Activated CD4-positive, alpha-beta T cell treated with anti-CD3 and anti-CD28 coated beads for 36 hours (primary cell): ENCODE measurements at regions of chr7 and their contacts with region 1.

Region 1: DNA sequence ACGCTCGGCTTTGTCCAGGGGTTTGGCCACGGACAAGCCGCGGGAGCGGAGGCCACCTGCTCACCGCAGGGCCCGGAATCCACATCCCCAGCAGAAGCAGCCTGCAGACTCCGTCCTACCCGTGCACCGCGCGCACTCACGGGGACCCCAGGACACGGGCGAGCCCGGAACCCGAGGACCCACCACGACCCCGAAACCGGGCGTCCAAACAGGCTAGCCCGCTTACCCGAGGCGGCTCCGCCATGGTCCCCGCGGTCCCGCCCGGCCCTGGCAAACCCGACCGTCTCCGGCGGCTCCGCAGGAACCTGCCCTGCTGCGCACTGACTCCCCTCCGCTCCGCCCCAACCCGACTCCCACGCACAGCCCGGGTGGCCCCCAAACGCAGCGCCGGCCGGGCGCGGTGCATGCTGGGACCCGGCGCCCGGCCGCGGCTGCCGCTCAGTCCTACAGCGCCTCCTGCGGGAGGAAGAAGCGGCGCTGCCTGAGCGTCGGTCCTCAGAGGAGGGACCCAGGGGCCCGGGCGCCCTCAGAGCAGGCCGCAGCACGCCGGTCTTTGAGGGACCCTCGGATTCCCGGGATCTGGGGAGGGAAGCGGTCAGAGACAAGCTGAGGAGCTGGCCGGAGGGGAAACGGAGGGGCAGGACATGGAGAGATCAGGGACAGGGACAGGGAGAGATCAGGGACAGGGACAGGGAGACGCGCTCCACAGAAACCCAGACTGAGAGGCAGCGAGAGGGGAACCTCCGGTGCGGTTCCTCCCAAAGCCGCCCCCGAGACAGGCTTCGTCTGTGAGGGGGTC is at the start of gene ZNF786:
- DNase-seq: peak; percentile 97
- ATAC-seq: peak; percentile 87
- H3K4me3 Mint-ChIP-seq: peak within 1 kb of the TSS; percentile 89
- H3K27ac Mint-ChIP-seq: peak within 1 kb of the TSS; percentile 100
- H3K4me1 Mint-ChIP-seq: peaks cover 19% of the 10 kb centered on the region
- H3K27me3 Mint-ChIP-seq: no peaks in the 10 kb centered on the region
- total RNA-seq, gene ZNF786: 4.4 to 4.8 TPM

Region 2: GRCh38 chr7:148987010-148987750 is 103.4 kb before region 1 on chr7:
- CTCF ChIA-PET with region 1: no interaction called
- POLR2A ChIA-PET with region 1: no interaction called
- intact Hi-C with region 1: loop called (anchors 1 to 5 kb)
- DNase-seq: peak; percentile 88
- ATAC-seq: peak; percentile 84
- H3K4me3 Mint-ChIP-seq: peak overlapping the region; percentile 90
- H3K27ac Mint-ChIP-seq: peak overlapping the region; percentile 97
- H3K4me1 Mint-ChIP-seq: peaks cover 40% of the 10 kb centered on the region
- H3K27me3 Mint-ChIP-seq: peaks cover 2% of the 10 kb centered on the region

Region 3: DNA sequence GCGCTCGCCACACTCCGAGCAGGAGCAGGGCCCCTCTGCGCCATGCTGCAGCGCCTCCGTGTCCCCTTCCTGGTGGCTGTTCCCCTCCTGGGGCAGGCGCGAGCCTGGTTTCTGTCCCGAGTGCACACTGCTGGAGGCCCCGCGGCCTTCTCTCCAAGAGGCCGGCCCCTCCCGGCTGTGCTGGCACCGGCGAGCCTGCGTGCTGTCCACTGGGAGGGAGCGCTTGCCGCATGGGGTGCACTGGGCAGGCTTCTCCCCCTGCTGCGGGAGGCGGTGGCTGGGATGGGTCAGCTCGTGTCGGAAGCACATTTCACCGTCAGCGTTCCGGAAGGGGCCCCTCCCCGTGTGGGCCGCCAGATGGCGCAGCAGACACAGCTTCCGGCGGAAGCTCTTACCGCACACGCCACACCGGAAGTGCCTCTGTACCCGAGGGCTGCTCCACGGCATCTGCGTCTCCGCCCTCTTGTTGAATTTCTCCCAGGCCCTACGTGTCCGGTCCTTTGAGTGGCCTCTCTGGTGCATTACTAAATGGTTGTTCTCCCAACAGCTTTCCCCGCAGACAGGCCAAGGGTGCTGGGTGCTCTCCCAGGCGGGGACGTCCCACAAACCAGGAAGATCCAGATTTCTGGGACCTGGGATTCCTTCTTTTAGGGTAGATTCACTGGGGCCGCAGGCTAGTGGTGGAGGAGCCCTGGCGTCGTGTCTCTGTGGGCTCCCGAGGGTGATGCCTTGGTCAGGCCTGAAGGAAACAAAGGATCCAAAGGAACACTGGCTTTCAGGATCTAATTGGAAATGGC is 18.8 kb before region 1 on chr7:
- CTCF ChIA-PET with region 1: interaction called, 3 read pairs
- POLR2A ChIA-PET with region 1: no interaction called
- intact Hi-C with region 1: loop called in 1 of 2 experiments (anchors 1 kb)
- DNase-seq: peak; percentile 70
- ATAC-seq: peak; percentile 84
- H3K4me3 Mint-ChIP-seq: peak overlapping the region; percentile 46
- H3K27ac Mint-ChIP-seq: peak overlapping the region; percentile 63
- H3K4me1 Mint-ChIP-seq: peaks cover 9% of the 10 kb centered on the region
- H3K27me3 Mint-ChIP-seq: no peaks in the 10 kb centered on the region

Region 4: GRCh38 chr7:149147072-149147751 is 56.6 kb after region 1 on chr7 and contains the start of gene ZNF398:
- CTCF ChIA-PET with region 1: no interaction called
- POLR2A ChIA-PET with region 1: interaction called, 6 read pairs
- intact Hi-C with region 1: loop called (anchors 1 to 2 kb)
- DNase-seq: peak; percentile 87
- ATAC-seq: peak; percentile 71
- H3K4me3 Mint-ChIP-seq: peak within 1 kb of the TSS; percentile 98
- H3K27ac Mint-ChIP-seq: peak within 1 kb of the TSS; percentile 99
- H3K4me1 Mint-ChIP-seq: peaks cover 34% of the 10 kb centered on the region
- H3K27me3 Mint-ChIP-seq: no peaks in the 10 kb centered on the region
- total RNA-seq, gene ZNF398: 9.6 to 10.5 TPM

Region 5: GRCh38 chr7:149468215-149468614 is 377.6 kb after region 1 on chr7:
- CTCF ChIA-PET with region 1: no interaction called
- POLR2A ChIA-PET with region 1: no interaction called
- intact Hi-C with region 1: no loop called
- DNase-seq: no peak
- ATAC-seq: no peak
- H3K4me3 Mint-ChIP-seq: no peak overlapping the region
- H3K27ac Mint-ChIP-seq: no peak overlapping the region
- H3K4me1 Mint-ChIP-seq: no peaks in the 10 kb centered on the region
- H3K27me3 Mint-ChIP-seq: peaks cover 7% of the 10 kb centered on the region